A673 (cell line): ENCODE measurements at regions of chr12 and their contacts with region 1.

Region 1: GRCh38 chr12:90854136-90854689 is 100.8 kb downstream of the CCER1 start:
- DNase-seq: peak; percentile 63
- H3K4me3 ChIP-seq: no peak overlapping the region
- H3K27ac ChIP-seq: no peak overlapping the region
- H3K4me1 ChIP-seq: no peaks in the 10 kb centered on the region
- H3K27me3 ChIP-seq: no peaks in the 10 kb centered on the region
- CTCF ChIP-seq: peak; percentile 85

Region 2: DNA sequence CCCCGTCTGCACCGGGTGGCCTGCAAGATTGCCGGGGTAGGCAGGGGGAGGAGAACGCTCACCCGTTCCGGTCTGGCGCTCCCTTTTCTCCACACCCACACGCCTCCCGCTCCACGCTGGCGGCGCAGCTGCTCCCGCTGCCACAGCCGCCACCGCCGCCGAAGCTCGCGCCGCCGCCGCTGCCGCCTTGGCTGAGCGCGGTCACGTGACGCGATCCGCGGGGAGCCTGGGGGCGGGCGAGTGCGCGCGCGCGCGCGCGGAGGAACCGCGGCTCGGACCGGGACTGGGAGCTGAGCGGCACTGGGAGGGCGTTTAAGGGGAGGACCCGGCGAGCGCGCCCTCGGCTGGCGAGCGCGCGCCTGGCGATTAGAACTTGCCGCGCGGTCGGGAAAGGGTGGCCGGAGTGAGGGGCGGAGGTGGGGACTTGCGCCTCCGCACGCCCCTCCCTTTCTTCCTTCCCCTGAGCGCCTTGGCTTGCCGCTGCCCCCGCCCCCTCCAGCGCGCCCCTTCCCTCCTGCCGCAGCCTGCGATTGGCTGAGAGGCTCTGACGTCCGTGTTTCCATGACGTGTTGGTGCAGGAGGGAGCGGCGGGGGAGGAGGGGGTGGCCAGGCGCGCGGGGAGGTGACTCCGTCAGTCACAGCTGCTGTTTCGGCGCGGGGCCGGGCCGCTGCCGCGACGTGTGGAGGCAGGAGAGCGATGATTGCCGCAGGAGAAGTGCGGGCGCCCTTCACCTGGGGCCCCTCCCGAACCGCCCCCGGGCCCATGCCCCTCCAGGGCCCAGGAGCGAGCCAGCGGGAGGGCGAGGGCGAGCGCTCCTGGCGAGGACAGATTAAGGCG is 1144.8 kb before region 1 on chr12:
- CTCF ChIA-PET with region 1: no interaction called
- POLR2A ChIA-PET with region 1: no interaction called
- intact Hi-C with region 1: loop called (anchors 10 kb)
- DNase-seq: peak; percentile 99
- H3K4me3 ChIP-seq: peak overlapping the region; percentile 89
- H3K27ac ChIP-seq: peak overlapping the region; percentile 96
- H3K4me1 ChIP-seq: peaks cover 17% of the 10 kb centered on the region
- H3K27me3 ChIP-seq: no peaks in the 10 kb centered on the region
- CTCF ChIP-seq: no peak

Region 3: DNA sequence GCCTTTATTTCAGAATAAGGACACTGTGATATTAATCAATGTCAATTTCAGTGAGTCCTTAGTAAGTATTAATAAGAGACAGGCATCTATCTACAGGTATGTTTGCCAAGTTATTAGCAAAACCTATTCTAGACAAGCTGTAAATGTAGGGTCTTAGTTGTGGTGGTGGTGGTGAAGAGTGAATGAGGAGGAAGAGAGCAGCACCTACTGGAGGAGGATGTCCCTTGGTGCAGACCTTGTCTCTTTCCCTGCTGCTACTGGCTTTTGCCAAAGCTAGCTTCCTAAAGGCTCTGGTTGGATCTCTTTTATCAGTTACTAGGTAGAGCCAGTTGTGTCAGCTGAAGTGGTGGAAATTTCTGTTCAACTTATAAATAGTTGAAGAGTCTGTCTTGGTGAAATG is 840.8 kb before region 1 on chr12:
- CTCF ChIA-PET with region 1: no interaction called
- POLR2A ChIA-PET with region 1: no interaction called
- intact Hi-C with region 1: loop called (anchors 10 kb)
- DNase-seq: no peak
- H3K4me3 ChIP-seq: no peak overlapping the region
- H3K27ac ChIP-seq: no peak overlapping the region
- H3K4me1 ChIP-seq: peaks cover 10% of the 10 kb centered on the region
- H3K27me3 ChIP-seq: no peaks in the 10 kb centered on the region
- CTCF ChIP-seq: 0 out of 2 replicates have a peak, but pooled peaks have one; percentile 36